GM12878 (cell line): ENCODE measurements at regions of chr16 and their contacts with region 1.

Region 1: DNA sequence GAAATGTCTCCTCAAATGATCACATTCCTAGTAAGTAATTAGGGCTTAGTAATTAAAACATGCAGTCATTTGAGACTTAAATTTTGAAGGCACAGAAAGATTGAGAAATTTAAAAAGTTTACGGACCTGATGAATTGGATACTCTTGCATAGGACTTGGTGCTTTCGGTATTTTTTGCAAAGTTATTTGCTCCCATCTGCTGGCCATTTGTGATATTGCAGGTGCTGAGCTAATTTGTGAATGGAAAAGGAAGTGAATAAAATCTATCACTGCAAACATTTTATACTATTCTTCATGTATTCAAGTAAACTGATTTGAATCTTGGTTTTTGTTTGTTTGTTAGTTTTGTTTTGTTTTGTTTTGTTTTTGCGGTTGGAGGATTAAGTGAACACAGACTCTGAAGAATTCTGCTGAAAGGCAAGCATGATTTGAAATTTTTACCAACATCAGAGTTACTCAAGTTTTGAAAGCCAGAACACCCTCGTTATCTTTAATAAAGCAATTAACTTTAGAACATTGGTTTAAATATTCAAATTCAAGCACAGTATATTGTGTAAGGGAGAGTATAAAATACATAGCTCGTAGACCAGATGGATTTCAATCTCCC is 689.5 kb upstream of the RBFOX1 start:
- DNase-seq: peak; percentile 11
- ATAC-seq: peak; percentile 51
- H3K4me3 ChIP-seq: no peak overlapping the region
- H3K27ac ChIP-seq: no peak overlapping the region
- H3K4me1 ChIP-seq: no peaks in the 10 kb centered on the region
- H3K27me3 ChIP-seq: no peaks in the 10 kb centered on the region
- CTCF ChIP-seq: peak; percentile 72 to 81 (median 78)
- EP300 ChIP-seq: no peak
- POLR2A ChIP-seq: no peak
- RAD21 ChIP-seq: peak; percentile 83

Region 2: DNA sequence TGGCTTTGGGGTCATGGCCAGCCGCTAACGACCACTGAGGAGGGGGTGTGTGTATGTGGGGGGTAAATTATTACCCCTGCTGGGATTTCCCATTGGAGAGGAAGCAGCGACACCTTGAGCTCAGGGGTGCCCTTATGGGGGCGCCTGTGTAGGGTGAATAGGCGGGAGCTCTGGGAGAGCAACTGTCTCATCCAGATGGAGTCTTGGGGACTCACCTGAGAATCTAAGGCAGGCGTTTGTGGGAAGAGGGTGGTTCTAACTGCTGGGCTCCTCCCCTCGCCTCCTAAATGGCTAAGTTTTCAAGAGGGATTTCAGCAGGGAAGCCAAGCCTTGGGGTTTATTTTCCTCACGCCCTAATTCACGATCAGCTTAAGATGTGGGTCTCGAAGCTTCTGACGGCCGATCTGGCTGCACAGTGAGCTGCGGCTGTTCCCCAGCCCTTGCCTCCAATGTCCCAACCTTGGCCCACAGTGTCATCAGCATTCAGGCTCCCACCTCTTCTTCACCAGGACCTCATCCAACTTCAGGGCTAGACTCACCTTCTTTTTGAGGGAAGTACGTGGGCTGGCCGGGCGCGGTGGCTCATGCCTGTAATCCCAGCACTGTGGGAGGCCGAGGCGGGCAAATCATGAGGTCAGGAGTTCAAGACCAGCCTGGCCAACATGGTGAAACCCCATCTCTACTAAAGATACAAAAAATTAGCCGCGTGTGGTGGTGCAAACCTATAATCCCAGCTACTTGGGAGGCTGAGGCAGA is 1408.7 kb before region 1 on chr16:
- CTCF ChIA-PET with region 1: interaction called, 4 read pairs
- POLR2A ChIA-PET with region 1: no interaction called
- RAD21 ChIA-PET with region 1: no interaction called
- SMC1A ChIA-PET with region 1: no interaction called
- in situ Hi-C with region 1: loop called (anchors 5 kb)
- intact Hi-C with region 1: loop called (anchors 5 kb)
- DNase-seq: no peak
- ATAC-seq: no peak
- H3K4me3 ChIP-seq: no peak overlapping the region
- H3K27ac ChIP-seq: no peak overlapping the region
- H3K4me1 ChIP-seq: no peaks in the 10 kb centered on the region
- H3K27me3 ChIP-seq: no peaks in the 10 kb centered on the region
- CTCF ChIP-seq: no peak
- EP300 ChIP-seq: no peak
- POLR2A ChIP-seq: no peak
- RAD21 ChIP-seq: no peak

Region 3: DNA sequence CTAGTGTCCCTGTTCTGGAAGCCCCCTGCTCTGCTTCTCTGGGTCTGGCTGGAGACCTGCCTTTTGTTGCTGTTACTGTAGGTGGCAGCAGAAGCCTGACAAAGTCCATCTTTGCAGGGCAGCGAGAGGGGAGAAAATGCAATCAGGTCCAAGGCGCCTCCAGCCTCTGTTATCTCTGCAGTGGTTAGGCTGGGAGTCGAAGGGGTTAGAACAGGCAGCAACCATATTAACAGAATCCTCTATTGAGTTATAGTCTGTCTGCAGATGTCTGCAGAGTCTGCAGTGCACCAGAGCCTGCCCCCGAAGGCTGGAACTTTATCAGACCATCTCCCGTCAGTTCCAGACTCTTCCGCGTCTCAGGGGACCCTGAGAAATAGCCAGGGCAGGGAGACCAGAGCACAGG is 1140.7 kb before region 1 on chr16:
- CTCF ChIA-PET with region 1: no interaction called
- POLR2A ChIA-PET with region 1: no interaction called
- RAD21 ChIA-PET with region 1: no interaction called
- SMC1A ChIA-PET with region 1: no interaction called
- in situ Hi-C with region 1: no loop called
- intact Hi-C with region 1: loop called (anchors 5 kb)
- DNase-seq: no peak
- ATAC-seq: no peak
- H3K4me3 ChIP-seq: no peak overlapping the region
- H3K27ac ChIP-seq: no peak overlapping the region
- H3K4me1 ChIP-seq: no peaks in the 10 kb centered on the region
- H3K27me3 ChIP-seq: no peaks in the 10 kb centered on the region
- CTCF ChIP-seq: peak in 2 of 3 experiments; percentile 23 to 41; a peak in 1 of 6 replicates
- EP300 ChIP-seq: no peak
- POLR2A ChIP-seq: no peak
- RAD21 ChIP-seq: peak; percentile 49

Region 4: DNA sequence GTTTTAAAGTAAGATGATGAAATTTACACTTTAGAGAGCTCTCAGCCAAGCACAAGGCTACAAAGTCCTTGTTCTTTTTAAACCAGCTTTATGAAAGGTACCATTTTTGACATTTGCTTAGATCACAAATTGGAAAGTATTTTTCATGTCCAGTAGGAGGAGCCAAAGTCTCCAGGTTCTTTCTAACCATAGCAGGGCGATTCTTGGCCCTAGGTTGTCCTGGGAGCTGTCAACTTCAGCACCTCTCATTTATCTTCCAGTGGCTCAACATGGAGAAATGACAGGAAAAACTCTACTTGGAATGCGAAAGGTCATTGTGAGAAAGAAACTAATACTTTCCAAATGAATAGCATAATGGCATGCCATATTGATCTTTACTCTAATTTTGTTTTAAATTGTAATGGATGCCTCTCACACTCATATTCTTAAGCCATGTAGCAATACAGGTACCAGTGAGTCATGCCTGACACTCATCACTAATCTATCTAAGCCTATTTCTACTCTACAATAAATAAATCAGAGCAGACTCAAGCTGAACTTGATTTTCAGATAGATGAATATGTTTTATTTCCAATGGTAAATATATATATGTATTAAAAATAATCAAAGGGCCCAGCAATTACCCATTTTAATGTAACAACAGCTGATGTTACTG is 626.5 kb before region 1 on chr16:
- CTCF ChIA-PET with region 1: interaction called, 7 read pairs
- POLR2A ChIA-PET with region 1: no interaction called
- RAD21 ChIA-PET with region 1: interaction called, 5 read pairs
- SMC1A ChIA-PET with region 1: interaction called, 3 read pairs
- in situ Hi-C with region 1: no loop called
- intact Hi-C with region 1: loop called (anchors 10 kb)
- DNase-seq: no peak
- ATAC-seq: no peak
- H3K4me3 ChIP-seq: no peak overlapping the region
- H3K27ac ChIP-seq: no peak overlapping the region
- H3K4me1 ChIP-seq: no peaks in the 10 kb centered on the region
- H3K27me3 ChIP-seq: no peaks in the 10 kb centered on the region
- CTCF ChIP-seq: peak in 1 of 3 experiments; percentile 9; a peak in 1 of 6 replicates
- EP300 ChIP-seq: no peak
- POLR2A ChIP-seq: no peak
- RAD21 ChIP-seq: 0 out of 2 replicates have a peak, but pooled peaks have one; percentile 8